Heart left ventricle (tissue), 16 donors: ENCODE measurements at regions of chr20 and their contacts with region 1.

Region 1: GRCh38 chr20:56392282-56393137 is at the start of gene CSTF1:
- DNase-seq: peak; percentile 99 to 100 (median 100)
- ATAC-seq: peak; percentile 98 to 99 (median 98)
- H3K4me3 ChIP-seq: peak within 1 kb of the TSS; percentile 64 to 93 (median 80)
- H3K27ac ChIP-seq: peak within 1 kb of the TSS; percentile 61 to 94 (median 88)
- H3K4me1 ChIP-seq: peaks cover 0 to 32% (median 20%) of the 10 kb centered on the region in 12 donors
- H3K27me3 ChIP-seq: no peaks in the 10 kb centered on the region
- CTCF ChIP-seq: no peak
- POLR2A ChIP-seq: peak in 1 of 2 donors; percentile 38
- total RNA-seq, gene CSTF1: 16.0 to 27.3 (median 22.0) TPM

Region 2: DNA sequence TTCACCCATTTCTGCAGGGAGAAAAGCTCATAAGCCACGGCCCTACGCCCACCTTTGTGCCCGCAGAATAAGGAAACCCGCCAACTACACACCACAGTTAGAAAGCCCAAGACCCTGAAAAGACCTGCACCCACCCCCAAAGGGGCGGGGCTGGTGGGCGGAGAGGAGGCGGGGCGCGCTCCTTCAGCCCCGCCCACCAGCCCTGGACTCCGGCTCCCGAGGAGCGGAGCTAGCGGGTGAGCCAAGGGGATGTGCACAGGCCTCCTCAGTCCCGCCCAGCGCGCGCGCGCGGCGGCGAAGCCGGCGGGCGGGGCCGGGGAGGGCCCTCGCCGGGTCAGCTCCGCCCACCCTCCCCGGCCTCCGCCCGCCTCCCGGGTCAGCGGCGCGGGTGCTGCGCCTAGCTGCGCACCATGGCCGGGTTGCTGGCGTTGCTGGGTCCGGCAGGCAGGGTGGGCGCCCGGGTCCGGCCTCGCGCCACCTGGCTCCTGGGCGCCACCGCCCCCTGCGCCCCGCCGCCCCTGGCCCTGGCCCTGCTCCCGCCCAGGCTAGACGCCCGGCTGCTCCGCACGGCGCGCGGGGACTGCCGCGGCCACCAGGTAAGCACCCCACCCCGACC is 33.8 kb before region 1 on chr20 and contains the start of gene FAM210B:
- intact Hi-C with region 1: loop called in 4 of 10 experiments (anchors 1 to 5 kb)
- DNase-seq: peak; percentile 89 to 94 (median 93)
- ATAC-seq: peak; percentile 92 to 98 (median 96)
- H3K4me3 ChIP-seq: peak within 1 kb of the TSS; percentile 68 to 99 (median 89)
- H3K27ac ChIP-seq: peak within 1 kb of the TSS; percentile 81 to 91 (median 86)
- H3K4me1 ChIP-seq: peaks cover 6 to 42% (median 30%) of the 10 kb centered on the region in 12 donors
- H3K27me3 ChIP-seq: no peaks in the 10 kb centered on the region
- CTCF ChIP-seq: no peak
- POLR2A ChIP-seq: peak; percentile 33 to 59
- total RNA-seq, gene FAM210B: 48.3 to 69.8 (median 57.2) TPM

Region 3: GRCh38 chr20:56460459-56460858 is 67.9 kb after region 1 on chr20:
- intact Hi-C with region 1: loop called in 4 of 10 experiments (anchors 5 kb)
- DNase-seq: no peak
- ATAC-seq: no peak
- H3K4me3 ChIP-seq: no peak overlapping the region
- H3K27ac ChIP-seq: peak overlapping the region in 1 of 12 donors; percentile 15
- H3K4me1 ChIP-seq: peaks cover 0 to 25% (median 0%) of the 10 kb centered on the region in 12 donors
- H3K27me3 ChIP-seq: no peaks in the 10 kb centered on the region
- CTCF ChIP-seq: no peak
- POLR2A ChIP-seq: no peak

Region 4: DNA sequence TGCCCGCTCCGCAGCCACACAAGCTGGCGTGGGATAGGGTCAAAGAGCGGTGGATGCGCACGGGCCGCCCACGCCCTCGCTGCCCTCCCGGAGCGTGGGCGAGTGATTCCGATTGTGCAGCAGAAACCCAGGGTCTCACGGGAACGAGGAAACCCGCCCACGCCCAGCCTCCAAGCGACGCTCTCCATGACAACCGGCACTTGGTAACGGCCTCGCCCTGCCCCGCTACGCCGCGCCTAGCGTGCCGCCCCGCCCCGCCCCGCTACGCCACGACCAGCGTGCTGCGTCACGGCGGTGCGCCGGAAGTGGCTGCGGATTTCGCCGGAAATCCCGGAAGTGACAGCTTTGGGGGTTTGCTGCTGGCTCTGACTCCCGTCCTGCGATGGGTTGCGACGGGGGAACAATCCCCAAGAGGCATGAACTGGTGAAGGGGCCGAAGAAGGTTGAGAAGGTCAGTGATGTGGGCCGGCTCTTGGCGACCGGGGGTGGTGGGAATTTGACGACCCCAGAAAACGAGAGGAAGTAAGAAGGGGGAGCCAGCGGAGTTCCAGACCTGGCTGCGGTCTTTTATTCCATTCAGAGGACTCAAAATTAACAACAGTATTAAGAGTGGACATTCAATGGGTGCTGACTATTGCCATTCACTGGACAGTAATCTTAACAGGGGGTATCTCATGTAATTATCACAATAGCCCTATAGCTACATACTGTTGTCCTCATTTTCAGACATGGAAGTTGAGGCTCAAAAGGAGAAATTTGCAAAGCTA is 76.0 kb after region 1 on chr20 and contains the start of gene RTF2:
- intact Hi-C with region 1: loop called in 9 of 10 experiments (anchors 1 to 5 kb)
- DNase-seq: peak; percentile 94 to 97 (median 96)
- ATAC-seq: peak; percentile 97 to 100 (median 100)
- H3K4me3 ChIP-seq: peak within 1 kb of the TSS; percentile 46 to 94 (median 84)
- H3K27ac ChIP-seq: peak within 1 kb of the TSS; percentile 38 to 91 (median 82)
- H3K4me1 ChIP-seq: peaks cover 0 to 48% (median 21%) of the 10 kb centered on the region in 12 donors
- H3K27me3 ChIP-seq: no peaks in the 10 kb centered on the region
- CTCF ChIP-seq: no peak
- POLR2A ChIP-seq: peak in 1 of 2 donors; percentile 50
- total RNA-seq, gene RTF2: 61.9 to 101 (median 86.2) TPM

Region 5: GRCh38 chr20:56574531-56575142 is 182.1 kb after region 1 on chr20:
- intact Hi-C with region 1: loop called in 1 of 10 experiments (anchors 10 kb)
- DNase-seq: no peak
- ATAC-seq: no peak
- H3K4me3 ChIP-seq: no peak overlapping the region
- H3K27ac ChIP-seq: no peak overlapping the region
- H3K4me1 ChIP-seq: no peaks in the 10 kb centered on the region
- H3K27me3 ChIP-seq: no peaks in the 10 kb centered on the region
- CTCF ChIP-seq: no peak
- POLR2A ChIP-seq: no peak